ENCODE measurements at regions of chr11 and their contacts with region 1.

Region 1: DNA sequence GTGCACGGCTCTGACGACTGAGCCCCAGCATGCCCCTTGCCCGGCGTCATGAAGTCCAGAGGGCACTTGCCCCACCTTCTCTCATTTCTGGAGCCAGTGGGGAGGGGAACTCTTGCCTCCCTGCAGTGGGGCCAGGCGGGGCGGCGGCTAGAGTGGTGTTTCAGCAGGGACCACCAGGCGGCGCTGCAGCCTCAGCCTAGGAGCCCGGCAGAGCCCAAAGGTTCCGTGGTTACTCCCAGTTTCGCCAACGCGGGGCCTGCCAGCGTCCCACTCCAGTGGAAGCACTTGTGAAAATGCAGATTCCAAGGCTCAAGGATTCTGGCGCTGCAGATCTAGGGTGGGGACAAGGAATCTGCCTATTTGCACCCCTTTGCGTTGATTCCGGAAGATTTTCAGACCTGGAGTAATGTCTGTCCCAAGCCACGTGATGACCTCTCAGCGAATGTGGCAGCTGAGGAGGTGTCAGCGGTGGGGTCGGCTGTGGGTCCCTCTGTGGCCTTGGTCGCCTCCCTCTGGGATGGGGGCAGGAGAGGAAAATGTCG is 55.7 kb downstream of the CD82 start:
- DNase-seq: peak; percentile 92
- H3K4me3 ChIP-seq: peak overlapping the region in 1 of 2 experiments; percentile 26; a peak in 1 of 4 replicates
- H3K27ac ChIP-seq: no peak overlapping the region
- H3K4me1 ChIP-seq: peaks cover 0 to 28% of the 10 kb centered on the region in 2 experiments; a peak in 1 of 4 replicates
- H3K27me3 ChIP-seq: no peaks in the 10 kb centered on the region
- CTCF ChIP-seq: peak; percentile 94
- EP300 ChIP-seq: no peak
- RAD21 ChIP-seq: peak; percentile 98

Region 2: DNA sequence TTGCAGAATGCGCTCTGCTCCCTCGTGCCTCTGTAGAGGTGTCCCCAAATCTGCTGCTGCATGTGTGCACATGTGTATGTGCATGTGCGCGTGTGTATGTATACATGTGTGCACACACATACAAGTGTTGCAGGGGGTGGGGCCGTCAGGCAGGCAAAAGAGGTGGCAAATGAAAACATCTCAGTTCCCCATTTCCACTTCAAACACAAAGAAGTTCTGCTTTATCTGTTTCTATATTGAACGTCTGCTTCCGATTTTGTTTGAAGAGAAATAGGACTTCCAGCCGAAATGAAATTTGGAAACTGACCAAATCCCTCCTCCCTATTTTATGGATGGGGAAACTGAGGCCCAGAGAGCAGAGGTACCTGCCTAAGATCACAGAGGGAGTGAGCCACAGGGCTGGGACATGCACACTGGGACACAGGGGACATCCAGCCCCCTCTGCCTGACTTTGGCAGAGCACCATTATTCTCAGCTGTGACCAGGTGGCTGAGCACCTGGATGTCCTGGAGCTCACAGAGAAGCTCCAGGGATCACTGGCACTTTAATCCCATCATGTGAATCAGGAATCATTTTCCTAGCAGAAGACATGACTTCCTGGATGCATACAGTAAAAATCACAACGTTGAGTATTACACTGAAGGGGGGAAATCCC is 270.1 kb before region 1 on chr11:
- CTCF ChIA-PET with region 1: no interaction called
- POLR2A ChIA-PET with region 1: no interaction called
- DNase-seq: no peak
- H3K4me3 ChIP-seq: no peak overlapping the region
- H3K27ac ChIP-seq: no peak overlapping the region
- H3K4me1 ChIP-seq: peaks cover 0 to 8% of the 10 kb centered on the region in 2 experiments; a peak in 1 of 4 replicates
- H3K27me3 ChIP-seq: no peaks in the 10 kb centered on the region; the same call in 1 of the 2 replicates
- CTCF ChIP-seq: no peak
- EP300 ChIP-seq: no peak
- RAD21 ChIP-seq: no peak

Region 3: GRCh38 chr11:44443836-44444769 is 177.1 kb before region 1 on chr11:
- CTCF ChIA-PET with region 1: no interaction called
- POLR2A ChIA-PET with region 1: no interaction called
- DNase-seq: no peak
- H3K4me3 ChIP-seq: no peak overlapping the region
- H3K27ac ChIP-seq: no peak overlapping the region
- H3K4me1 ChIP-seq: peaks cover 0 to 2% of the 10 kb centered on the region in 2 experiments; a peak in 1 of 4 replicates
- H3K27me3 ChIP-seq: no peaks in the 10 kb centered on the region
- CTCF ChIP-seq: no peak
- EP300 ChIP-seq: no peak
- RAD21 ChIP-seq: no peak

Region 4: GRCh38 chr11:44572884-44573283 is 48.3 kb before region 1 on chr11:
- CTCF ChIA-PET with region 1: interaction called, 20 read pairs
- POLR2A ChIA-PET with region 1: no interaction called
- DNase-seq: peak; percentile 1
- H3K4me3 ChIP-seq: no peak overlapping the region
- H3K27ac ChIP-seq: no peak overlapping the region
- H3K4me1 ChIP-seq: peaks cover 17 to 51% of the 10 kb centered on the region in 2 experiments; a peak in 3 of 4 replicates
- H3K27me3 ChIP-seq: no peaks in the 10 kb centered on the region
- CTCF ChIP-seq: no peak
- EP300 ChIP-seq: no peak
- RAD21 ChIP-seq: no peak

Region 5: DNA sequence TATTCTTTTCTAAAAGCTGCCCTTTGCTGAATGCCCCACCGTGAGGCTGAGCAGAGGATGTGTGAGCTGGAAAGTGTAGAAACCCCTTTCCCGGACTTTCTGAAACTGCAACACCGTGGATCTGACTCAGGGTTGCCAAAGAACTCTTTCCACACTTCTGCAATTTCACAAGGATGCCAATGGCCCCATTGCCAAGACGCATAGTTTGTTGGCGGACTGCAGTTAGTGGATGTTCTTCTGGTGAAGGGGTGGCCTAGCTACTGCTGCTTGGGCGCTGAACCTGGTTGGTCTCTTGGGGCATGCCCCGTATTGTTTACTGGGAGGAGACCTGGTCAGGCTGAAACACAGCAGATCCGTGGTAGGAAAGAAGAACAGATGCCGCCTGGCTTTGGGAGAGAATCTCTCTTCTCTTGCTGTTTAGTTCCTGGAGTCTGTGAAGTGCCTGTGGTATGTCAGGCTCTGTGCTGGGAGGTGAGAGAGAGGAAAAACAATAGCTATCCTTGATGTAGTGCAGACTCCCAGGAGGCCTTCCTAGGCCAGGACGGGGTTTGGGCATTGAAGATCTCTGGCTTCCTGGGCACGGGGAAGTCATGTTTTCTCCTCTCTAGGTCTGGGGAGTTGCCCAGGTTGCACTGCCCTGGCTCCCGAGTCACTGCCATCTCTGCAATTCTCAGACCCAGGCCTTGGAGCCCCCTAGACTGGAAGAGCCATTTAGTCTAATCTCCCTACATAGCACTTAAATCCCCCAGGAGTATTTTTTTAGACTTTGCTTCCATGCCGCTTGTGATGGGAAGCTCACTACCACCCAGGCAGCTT is 28.9 kb before region 1 on chr11:
- CTCF ChIA-PET with region 1: interaction called, 12 read pairs
- POLR2A ChIA-PET with region 1: no interaction called
- DNase-seq: no peak
- H3K4me3 ChIP-seq: no peak overlapping the region
- H3K27ac ChIP-seq: peak overlapping the region in 1 of 2 experiments; percentile 51; a peak in 1 of 4 replicates
- H3K4me1 ChIP-seq: peaks cover 0 to 35% of the 10 kb centered on the region in 2 experiments; a peak in 1 of 4 replicates
- H3K27me3 ChIP-seq: no peaks in the 10 kb centered on the region
- CTCF ChIP-seq: no peak
- EP300 ChIP-seq: no peak
- RAD21 ChIP-seq: no peak

Region 6: DNA sequence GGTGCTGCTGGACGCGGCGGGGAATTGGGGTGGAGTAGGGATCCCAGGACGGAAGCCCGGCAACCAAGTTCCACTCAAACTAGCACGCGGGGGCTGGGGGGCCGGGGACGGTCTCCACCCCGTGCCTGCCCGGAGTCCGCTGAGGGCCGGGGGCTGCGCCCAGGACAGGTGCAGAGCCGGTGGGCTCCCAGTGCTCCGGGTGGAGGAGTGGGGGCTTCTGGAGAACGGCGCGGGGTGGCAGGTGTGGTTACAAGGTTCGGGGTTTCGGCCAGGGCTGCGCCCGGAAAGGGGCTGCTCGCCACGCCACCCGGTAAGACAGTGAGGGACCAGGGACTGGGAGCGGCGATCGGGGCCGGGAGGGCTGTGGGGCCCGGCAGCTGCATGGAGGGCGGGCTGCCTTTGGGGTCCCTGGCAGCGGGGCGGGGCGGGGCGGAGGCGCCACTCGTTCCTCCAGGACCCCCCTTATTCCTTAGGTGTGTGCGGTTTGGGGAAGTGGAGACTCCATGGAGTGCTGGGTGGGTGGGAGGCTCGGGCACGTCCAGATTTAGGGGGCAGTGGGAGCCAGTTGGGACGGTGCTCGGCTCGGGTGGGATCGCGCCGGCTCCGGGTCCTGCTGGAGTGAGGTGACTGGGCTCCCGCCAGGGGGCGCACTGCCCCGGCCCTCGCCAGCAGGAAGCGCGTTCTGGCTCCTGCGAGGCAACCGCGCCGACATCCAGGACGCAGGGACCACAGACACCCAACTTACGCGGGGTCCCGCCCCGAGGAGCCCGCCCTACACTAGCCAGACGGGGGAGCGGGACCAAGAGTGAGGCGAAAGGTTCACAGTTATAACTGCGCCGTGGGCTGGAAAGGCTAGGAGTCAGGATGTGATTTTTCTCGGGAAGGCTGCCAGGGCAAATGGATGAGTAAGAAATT is 106.4 kb after region 1 on chr11:
- CTCF ChIA-PET with region 1: interaction called, 19 read pairs
- POLR2A ChIA-PET with region 1: interaction called, 4 read pairs
- DNase-seq: peak; percentile 92
- H3K4me3 ChIP-seq: peak overlapping the region; percentile 61 to 62
- H3K27ac ChIP-seq: peak overlapping the region in 1 of 2 experiments; percentile 92; a peak in 2 of 4 replicates
- H3K4me1 ChIP-seq: peaks cover 5 to 56% of the 10 kb centered on the region in 2 experiments; a peak in 3 of 4 replicates
- H3K27me3 ChIP-seq: peaks cover 25% of the 10 kb centered on the region; the same call in 1 of the 2 replicates
- CTCF ChIP-seq: peak; percentile 80
- EP300 ChIP-seq: no peak
- RAD21 ChIP-seq: peak; percentile 85

Region 7: GRCh38 chr11:44893846-44894617 is 272.8 kb after region 1 on chr11:
- CTCF ChIA-PET with region 1: interaction called, 93 read pairs
- POLR2A ChIA-PET with region 1: no interaction called
- DNase-seq: peak; percentile 86
- H3K4me3 ChIP-seq: peak overlapping the region in 1 of 2 experiments; percentile 46; a peak in 1 of 4 replicates
- H3K27ac ChIP-seq: peak overlapping the region in 1 of 2 experiments; percentile 64; a peak in 2 of 4 replicates
- H3K4me1 ChIP-seq: peaks cover 0 to 35% of the 10 kb centered on the region in 2 experiments; a peak in 1 of 4 replicates
- H3K27me3 ChIP-seq: no peaks in the 10 kb centered on the region; the same call in 1 of the 2 replicates
- CTCF ChIP-seq: peak; percentile 91
- EP300 ChIP-seq: no peak
- RAD21 ChIP-seq: peak; percentile 94

Region 8: GRCh38 chr11:44927174-44927661 is 306.0 kb after region 1 on chr11:
- CTCF ChIA-PET with region 1: interaction called, 35 read pairs
- POLR2A ChIA-PET with region 1: no interaction called
- DNase-seq: peak; percentile 82
- H3K4me3 ChIP-seq: peak overlapping the region in 1 of 2 experiments; percentile 21; a peak in 1 of 4 replicates
- H3K27ac ChIP-seq: no peak overlapping the region
- H3K4me1 ChIP-seq: peaks cover 0 to 8% of the 10 kb centered on the region in 2 experiments; a peak in 1 of 4 replicates
- H3K27me3 ChIP-seq: no peaks in the 10 kb centered on the region
- CTCF ChIP-seq: peak; percentile 91
- EP300 ChIP-seq: no peak
- RAD21 ChIP-seq: peak; percentile 68